Heart left ventricle (tissue), 16 donors: ENCODE measurements at regions of chr17 and their contacts with region 1.

Region 1: DNA sequence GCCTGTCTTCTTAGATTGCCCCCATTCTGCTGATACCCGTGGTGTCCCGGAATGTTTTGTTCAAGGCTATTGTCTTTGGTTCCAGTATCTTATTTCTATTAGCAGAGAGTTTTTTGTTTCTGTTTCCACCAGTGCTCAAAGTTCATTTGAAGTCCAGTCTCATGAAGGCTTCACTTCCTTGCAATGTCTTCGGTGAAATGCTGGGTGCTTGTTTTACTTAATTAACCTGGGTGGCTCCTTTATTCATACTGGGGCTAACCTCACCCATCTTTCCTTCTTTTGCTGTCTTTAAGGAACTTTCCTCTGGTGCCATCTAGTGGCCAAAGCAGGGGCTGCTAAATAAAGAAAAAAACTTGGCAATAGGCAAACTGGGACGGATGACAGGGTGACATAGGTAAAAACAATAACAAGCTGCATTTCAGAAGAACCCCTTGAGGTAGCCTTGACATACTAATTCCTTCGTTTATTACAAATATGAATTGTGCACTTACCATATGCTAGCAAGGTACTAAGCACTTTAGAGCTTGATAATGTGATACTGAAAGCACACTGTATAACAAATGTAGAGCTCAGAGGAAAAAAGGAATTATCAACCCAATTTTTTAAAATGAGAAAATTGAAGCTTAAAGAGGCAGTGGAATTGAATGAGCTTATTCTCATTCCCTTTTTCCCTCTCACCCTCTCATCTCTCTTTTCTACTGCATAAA is 2.8 kb upstream of the SMIM36 start:
- DNase-seq: peak in 4 of 5 donors; percentile 42 to 63 (median 58)
- ATAC-seq: peak in 3 of 4 donors; percentile 53 to 63 (median 58)
- H3K4me3 ChIP-seq: no peak overlapping the region
- H3K27ac ChIP-seq: no peak overlapping the region
- H3K4me1 ChIP-seq: peaks cover 0 to 8% (median 0%) of the 10 kb centered on the region in 12 donors
- H3K27me3 ChIP-seq: peaks cover 0 to 6% (median 0%) of the 10 kb centered on the region in 9 donors
- CTCF ChIP-seq: peak; percentile 86 to 98 (median 92)
- POLR2A ChIP-seq: no peak

Region 2: DNA sequence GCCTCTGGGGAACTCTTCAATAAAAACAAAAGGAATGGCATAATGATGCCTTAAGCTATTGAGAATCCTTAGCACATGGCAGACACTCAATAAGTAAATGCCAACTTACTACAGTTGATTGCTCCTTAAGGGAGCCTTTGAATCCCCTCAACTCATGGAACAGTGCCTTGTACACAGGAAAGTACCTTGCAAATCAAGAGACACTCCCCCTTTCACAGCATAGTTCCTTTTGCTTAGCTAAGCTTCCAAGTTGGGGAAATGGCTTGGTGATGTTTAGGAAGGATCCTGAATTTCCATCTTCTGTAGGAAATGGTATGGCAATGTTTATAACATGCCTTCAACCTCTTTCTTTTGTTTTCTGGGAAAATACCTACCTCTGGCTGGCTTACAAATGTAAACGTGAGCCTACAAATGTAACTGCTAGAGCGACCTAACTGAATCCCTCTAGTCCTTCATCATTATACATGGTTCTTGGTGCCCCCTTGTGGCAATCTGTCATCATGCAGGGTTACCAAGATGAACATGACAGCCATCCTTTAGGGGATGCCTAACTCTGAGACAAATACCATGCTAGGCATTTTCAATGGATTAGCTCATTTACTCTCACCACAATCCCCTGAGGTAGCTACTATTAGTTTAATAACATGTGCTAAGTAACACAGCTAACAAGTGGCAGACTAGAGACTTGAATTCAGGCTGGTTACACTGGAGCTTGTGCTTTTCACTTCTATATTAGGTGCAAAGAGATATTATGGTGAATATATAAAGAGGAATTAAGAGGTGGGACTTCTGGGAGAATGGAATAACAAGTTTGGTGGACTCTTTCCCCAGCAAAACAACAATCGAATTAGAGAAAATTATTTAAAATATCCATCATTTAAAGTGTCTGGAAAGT is 157.4 kb before region 1 on chr17:
- intact Hi-C with region 1: loop called (anchors 1 to 10 kb)
- DNase-seq: peak in 4 of 5 donors; percentile 39 to 70 (median 53)
- ATAC-seq: peak in 3 of 4 donors; percentile 68 to 85 (median 75)
- H3K4me3 ChIP-seq: no peak overlapping the region
- H3K27ac ChIP-seq: no peak overlapping the region
- H3K4me1 ChIP-seq: no peaks in the 10 kb centered on the region
- H3K27me3 ChIP-seq: no peaks in the 10 kb centered on the region
- CTCF ChIP-seq: peak; percentile 67 to 84 (median 76)
- POLR2A ChIP-seq: no peak

Region 3: GRCh38 chr17:55366020-55366481 is 148.0 kb before region 1 on chr17:
- intact Hi-C with region 1: loop called in 1 of 10 experiments (anchors 5 kb)
- DNase-seq: no peak
- ATAC-seq: no peak
- H3K4me3 ChIP-seq: no peak overlapping the region
- H3K27ac ChIP-seq: no peak overlapping the region
- H3K4me1 ChIP-seq: no peaks in the 10 kb centered on the region
- H3K27me3 ChIP-seq: no peaks in the 10 kb centered on the region
- CTCF ChIP-seq: no peak
- POLR2A ChIP-seq: no peak

Region 4: DNA sequence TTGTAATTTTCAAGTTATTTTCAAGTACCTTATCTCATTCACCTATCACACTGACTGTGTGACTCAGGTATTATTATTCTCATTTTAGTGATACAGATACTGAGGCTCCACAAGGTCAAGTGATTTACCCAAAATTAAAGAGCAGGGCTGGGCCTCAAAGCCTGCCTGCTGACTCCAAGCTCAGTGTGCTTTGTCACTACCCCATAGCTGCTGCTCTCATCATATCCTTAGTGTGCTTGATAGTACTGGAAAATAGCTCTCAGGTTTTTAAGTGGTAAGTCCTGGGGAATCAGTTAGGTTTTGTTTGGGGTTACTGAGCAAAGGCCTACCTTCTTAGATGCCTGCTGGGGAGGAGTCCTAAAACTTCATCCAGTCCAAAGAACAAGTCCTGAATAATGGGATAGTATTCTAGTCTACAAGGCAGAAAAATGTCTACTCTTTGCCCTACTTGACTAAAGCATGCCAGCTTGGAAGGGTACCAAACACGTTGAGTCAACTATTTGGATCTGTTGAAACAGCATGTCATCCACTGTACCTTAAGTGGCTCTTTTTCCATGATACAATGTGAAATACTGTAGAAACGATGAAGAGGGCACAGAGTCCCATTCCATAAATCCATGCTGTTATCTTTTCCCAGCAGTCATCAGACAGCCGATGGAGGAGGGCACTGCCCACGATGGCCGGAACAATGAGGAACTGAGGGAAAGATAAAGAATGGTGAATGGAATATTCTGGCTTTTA is 103.1 kb before region 1 on chr17:
- intact Hi-C with region 1: loop called in 5 of 10 experiments (anchors 5 to 10 kb)
- DNase-seq: peak in 1 of 5 donors; percentile 34
- ATAC-seq: peak; percentile 55 to 86 (median 82)
- H3K4me3 ChIP-seq: no peak overlapping the region
- H3K27ac ChIP-seq: peak overlapping the region in 10 of 12 donors; percentile 11 to 68 (median 40)
- H3K4me1 ChIP-seq: peaks cover 0 to 24% (median 7%) of the 10 kb centered on the region in 12 donors
- H3K27me3 ChIP-seq: no peaks in the 10 kb centered on the region
- CTCF ChIP-seq: no peak
- POLR2A ChIP-seq: no peak

Region 5: GRCh38 chr17:55478986-55479385 is 35.1 kb before region 1 on chr17:
- intact Hi-C with region 1: no loop called
- DNase-seq: no peak
- ATAC-seq: no peak
- H3K4me3 ChIP-seq: no peak overlapping the region
- H3K27ac ChIP-seq: no peak overlapping the region
- H3K4me1 ChIP-seq: peaks cover 0 to 7% (median 0%) of the 10 kb centered on the region in 12 donors
- H3K27me3 ChIP-seq: no peaks in the 10 kb centered on the region
- CTCF ChIP-seq: no peak
- POLR2A ChIP-seq: no peak

Region 6: DNA sequence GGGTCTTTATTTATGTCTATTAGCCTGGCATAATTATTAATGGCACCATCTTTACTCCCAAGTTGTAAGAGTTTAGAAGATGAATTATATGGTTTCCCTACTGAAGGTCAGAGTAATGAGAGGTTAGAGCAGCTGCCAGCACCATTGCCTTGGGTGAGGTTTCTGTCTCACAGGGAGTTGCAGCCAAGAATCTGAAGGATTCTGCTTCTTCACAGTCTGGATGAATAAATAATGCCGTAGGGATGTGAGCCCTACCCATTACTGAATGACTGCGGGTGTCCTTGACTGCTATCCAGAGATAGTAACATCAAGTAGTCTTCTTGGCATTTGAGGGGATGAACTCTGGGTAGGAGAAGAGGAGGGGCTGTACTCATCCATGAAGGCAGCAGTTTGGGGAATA is 50.0 kb after region 1 on chr17:
- intact Hi-C with region 1: no loop called
- DNase-seq: no peak
- ATAC-seq: no peak
- H3K4me3 ChIP-seq: no peak overlapping the region
- H3K27ac ChIP-seq: no peak overlapping the region
- H3K4me1 ChIP-seq: peaks cover 0 to 3% (median 0%) of the 10 kb centered on the region in 12 donors
- H3K27me3 ChIP-seq: no peaks in the 10 kb centered on the region
- CTCF ChIP-seq: no peak
- POLR2A ChIP-seq: no peak

Region 7: GRCh38 chr17:55612691-55613141 is 98.7 kb after region 1 on chr17:
- intact Hi-C with region 1: no loop called
- DNase-seq: peak in 1 of 5 donors; percentile 10
- ATAC-seq: peak in 1 of 4 donors; percentile 37
- H3K4me3 ChIP-seq: no peak overlapping the region
- H3K27ac ChIP-seq: no peak overlapping the region
- H3K4me1 ChIP-seq: peaks cover 0 to 9% (median 0%) of the 10 kb centered on the region in 12 donors
- H3K27me3 ChIP-seq: peaks cover 0 to 4% (median 0%) of the 10 kb centered on the region in 9 donors
- CTCF ChIP-seq: no peak
- POLR2A ChIP-seq: no peak